GM18951 (cell line): ENCODE measurements at regions of chr6 and their contacts with region 1.

Region 1: GRCh38 chr6:35139908-35140655 is 1.1 kb downstream of the TCP11 start:
- POLR2A ChIP-seq: no peak

Region 2: GRCh38 chr6:34990971-34991560 is 149.0 kb before region 1 on chr6:
- in situ Hi-C with region 1: loop called (anchors 5 kb)
- POLR2A ChIP-seq: no peak